ENCODE measurements at regions of chr21 and their contacts with region 1.

Region 1: GRCh38 chr21:41641821-41642701 is 124.8 kb downstream of the RIPK4 start:
- DNase-seq: peak; percentile 74
- H3K4me3 ChIP-seq: peak overlapping the region; percentile 15; the same call in 1 of the 2 replicates
- CTCF ChIP-seq: no peak

Region 2: GRCh38 chr21:41361786-41362604 is 280.1 kb before region 1 on chr21 and contains the start of gene MX2:
- CTCF ChIA-PET with region 1: no interaction called
- POLR2A ChIA-PET with region 1: no interaction called
- DNase-seq: peak; percentile 47
- H3K4me3 ChIP-seq: peak within 1 kb of the TSS; percentile 58
- CTCF ChIP-seq: no peak

Region 3: GRCh38 chr21:41548781-41549180 is 93.3 kb before region 1 on chr21:
- CTCF ChIA-PET with region 1: no interaction called
- POLR2A ChIA-PET with region 1: no interaction called
- DNase-seq: no peak
- H3K4me3 ChIP-seq: no peak overlapping the region
- CTCF ChIP-seq: no peak

Region 4: DNA sequence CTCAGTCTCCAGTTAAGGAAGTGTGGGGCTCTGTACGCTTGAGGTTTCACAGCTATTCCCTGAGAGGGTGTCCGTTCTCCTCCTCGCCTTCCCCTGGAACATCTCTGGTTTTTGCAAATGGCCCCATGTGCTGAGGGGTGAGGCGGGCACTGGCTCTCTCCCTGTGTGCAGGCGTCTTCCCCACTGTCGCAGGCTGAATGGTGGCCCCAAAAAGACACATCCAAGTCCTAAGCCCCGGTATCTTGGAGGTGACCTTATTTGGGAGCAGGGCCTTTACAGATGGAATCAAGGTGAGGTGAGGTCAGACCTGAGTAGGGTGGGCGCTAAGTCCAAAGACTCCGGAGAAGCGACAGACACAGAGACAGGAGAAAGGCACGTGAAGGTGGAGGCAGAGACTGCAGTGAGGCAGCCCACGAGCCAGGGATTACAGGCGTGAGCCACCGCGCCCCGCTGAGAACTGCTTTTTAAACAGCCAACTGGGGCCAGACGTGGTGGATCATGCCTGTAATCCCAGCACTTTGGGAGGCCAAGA is 36.1 kb before region 1 on chr21:
- CTCF ChIA-PET with region 1: no interaction called
- POLR2A ChIA-PET with region 1: no interaction called
- DNase-seq: no peak
- H3K4me3 ChIP-seq: no peak overlapping the region
- CTCF ChIP-seq: no peak

Region 5: DNA sequence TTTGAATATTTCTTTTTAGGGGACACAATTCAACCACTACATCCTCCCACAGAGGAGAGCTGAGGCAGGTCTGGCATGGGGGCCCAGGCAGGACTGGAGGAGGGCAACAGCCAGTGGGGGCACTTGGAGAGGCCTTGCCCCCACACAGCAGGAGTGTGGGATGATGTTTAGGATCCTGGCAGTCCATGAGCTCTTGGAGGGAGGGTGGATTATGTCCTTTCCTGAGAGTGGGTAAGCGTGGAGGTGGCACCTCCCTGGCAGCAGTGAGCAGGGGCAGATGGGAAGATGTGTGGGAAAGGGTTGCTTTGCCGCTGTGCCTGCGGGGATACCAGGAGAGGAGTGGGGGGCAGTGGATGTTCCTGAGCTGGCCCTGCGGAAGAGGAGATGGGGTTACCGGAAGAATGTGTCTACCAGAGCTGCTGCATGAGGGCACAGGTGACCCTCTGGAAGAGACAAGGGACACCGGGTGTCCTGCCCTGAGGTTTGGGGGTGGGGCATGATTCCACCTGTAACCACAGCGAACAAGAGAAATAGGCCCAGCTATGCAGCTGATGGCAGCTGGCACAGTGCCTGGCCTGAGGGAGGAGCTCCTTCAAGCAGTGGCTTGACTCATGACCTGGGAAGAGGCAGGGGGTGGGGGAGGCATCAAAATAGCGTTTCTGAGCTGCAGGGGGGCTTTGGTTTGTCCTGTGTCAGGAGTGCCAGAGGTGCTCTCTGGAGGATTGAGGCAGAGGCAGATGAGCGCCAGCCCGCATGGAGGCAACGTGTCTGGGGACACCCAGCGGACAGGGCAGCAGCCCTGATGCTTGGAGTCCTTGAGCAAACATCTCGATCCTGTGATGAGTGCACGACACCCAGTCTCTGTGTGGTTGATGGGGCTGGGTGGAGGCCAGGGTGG is 10.2 kb before region 1 on chr21:
- CTCF ChIA-PET with region 1: interaction called, 10 read pairs
- POLR2A ChIA-PET with region 1: interaction called, 3 read pairs
- DNase-seq: no peak
- H3K4me3 ChIP-seq: no peak overlapping the region
- CTCF ChIP-seq: no peak

Region 6: GRCh38 chr21:41879190-41879998 is 237.3 kb after region 1 on chr21 and contains the start of gene PRDM15:
- CTCF ChIA-PET with region 1: no interaction called
- POLR2A ChIA-PET with region 1: no interaction called
- DNase-seq: peak; percentile 44
- H3K4me3 ChIP-seq: peak within 1 kb of the TSS; percentile 78
- CTCF ChIP-seq: no peak

Measured in AG04449 (cell line).